Calu3 (cell line): ENCODE measurements at regions of chr3 and their contacts with region 1.

Region 1: DNA sequence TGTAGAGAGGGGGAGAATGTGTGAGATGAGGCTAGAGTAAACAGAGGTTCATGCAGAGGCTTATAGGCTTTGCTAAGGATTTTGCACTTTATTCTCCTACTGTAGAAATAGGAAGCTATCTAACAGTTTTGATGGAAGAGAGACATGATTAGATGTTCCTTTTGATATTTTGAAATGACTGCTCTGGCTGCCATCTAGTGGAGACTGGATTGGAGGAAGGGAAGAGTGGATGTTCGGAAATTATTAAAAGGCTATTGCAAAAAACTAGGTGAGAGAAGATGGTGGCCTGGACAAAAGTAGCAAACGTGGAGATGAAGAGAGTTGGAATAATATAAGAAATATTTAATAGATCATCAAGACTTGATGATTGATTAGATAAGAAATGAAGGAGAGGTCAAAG is 42.2 kb downstream of the SYN2 start:
- DNase-seq: peak; percentile 4
- H3K4me3 Mint-ChIP-seq: no peak overlapping the region
- H3K27ac Mint-ChIP-seq: no peak overlapping the region
- H3K4me1 Mint-ChIP-seq: no peaks in the 10 kb centered on the region
- H3K27me3 Mint-ChIP-seq: peaks cover under 1% of the 10 kb centered on the region
- CTCF ChIP-seq: no peak

Region 2: GRCh38 chr3:11850003-11850402 is 196.4 kb before region 1 on chr3:
- CTCF ChIA-PET with region 1: no interaction called
- intact Hi-C with region 1: loop called (anchors 10 kb)
- DNase-seq: no peak
- H3K4me3 Mint-ChIP-seq: no peak overlapping the region
- H3K27ac Mint-ChIP-seq: no peak overlapping the region
- H3K4me1 Mint-ChIP-seq: peaks cover 5% of the 10 kb centered on the region
- H3K27me3 Mint-ChIP-seq: peaks cover 49% of the 10 kb centered on the region
- CTCF ChIP-seq: no peak

Region 3: DNA sequence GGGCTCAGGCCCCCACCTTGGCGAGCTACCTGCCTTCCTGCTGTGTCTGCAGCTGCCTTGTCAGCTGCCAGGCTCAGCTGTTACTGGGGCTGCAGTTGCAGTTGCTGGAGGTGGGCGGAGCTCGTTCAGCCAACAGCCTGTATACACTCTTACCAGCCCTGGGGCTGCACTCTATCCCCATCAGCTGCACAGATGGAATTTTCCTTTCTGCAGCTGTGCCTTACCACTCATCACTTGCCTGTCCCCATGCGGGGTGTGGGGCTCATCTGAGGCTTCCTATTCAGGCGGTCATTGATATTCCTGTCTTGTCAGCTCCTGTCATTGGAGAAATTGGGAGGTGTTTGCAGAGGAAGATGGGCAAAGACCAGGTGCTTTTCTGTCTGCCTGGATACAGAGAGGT is 51.3 kb before region 1 on chr3:
- CTCF ChIA-PET with region 1: no interaction called
- intact Hi-C with region 1: no loop called
- DNase-seq: no peak
- H3K4me3 Mint-ChIP-seq: no peak overlapping the region
- H3K27ac Mint-ChIP-seq: no peak overlapping the region
- H3K4me1 Mint-ChIP-seq: no peaks in the 10 kb centered on the region
- H3K27me3 Mint-ChIP-seq: no peaks in the 10 kb centered on the region
- CTCF ChIP-seq: no peak

Region 4: GRCh38 chr3:12100784-12101183 is 54.4 kb after region 1 on chr3:
- CTCF ChIA-PET with region 1: no interaction called
- intact Hi-C with region 1: no loop called
- DNase-seq: no peak
- H3K4me3 Mint-ChIP-seq: no peak overlapping the region
- H3K27ac Mint-ChIP-seq: no peak overlapping the region
- H3K4me1 Mint-ChIP-seq: no peaks in the 10 kb centered on the region
- H3K27me3 Mint-ChIP-seq: peaks cover 22% of the 10 kb centered on the region
- CTCF ChIP-seq: no peak